ENCODE measurements at regions of chr6 and their contacts with region 1.

Region 1: DNA sequence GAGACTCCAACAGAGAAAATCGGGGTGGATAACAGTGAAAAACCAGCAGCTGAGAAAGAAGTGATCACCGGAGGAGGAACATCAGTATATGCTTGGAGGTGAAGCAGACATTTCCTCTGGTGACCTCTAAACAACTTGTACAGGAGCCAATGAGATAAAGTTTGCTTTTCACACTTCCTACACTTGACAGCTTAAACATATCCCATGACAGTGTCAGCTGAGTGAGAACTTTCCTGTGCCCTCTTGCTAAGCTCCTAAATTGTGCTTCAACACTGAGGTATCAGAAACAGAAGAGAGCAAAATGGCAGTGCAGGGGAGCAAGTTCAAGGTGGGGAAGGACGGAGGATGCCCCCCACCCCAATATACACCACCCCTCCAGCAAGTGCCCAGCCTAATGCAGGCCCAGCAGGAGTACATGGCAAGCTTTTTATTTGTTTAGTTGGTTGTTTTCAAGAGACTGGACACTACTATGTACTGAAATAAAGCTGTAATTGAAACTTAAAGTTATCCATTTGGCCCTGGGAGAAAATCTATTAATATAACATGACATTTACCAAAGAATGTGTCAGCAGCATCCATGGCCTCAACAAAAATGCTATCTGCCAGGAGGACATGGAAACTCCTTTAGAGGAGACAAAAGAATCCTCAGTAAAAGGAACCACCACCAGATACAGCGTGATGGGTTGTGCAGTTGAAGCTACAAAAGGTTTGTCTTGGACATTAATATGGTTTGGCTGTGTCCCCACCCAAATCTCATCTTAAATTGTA is 540.2 kb downstream of the PRKN start:
- DNase-seq: no peak
- ATAC-seq: peak; percentile 92

Region 2: GRCh38 chr6:162230147-162230752 is 42.9 kb after region 1 on chr6:
- intact Hi-C with region 1: loop called (anchors 5 kb)
- DNase-seq: no peak
- ATAC-seq: peak; percentile 79

Region 3: DNA sequence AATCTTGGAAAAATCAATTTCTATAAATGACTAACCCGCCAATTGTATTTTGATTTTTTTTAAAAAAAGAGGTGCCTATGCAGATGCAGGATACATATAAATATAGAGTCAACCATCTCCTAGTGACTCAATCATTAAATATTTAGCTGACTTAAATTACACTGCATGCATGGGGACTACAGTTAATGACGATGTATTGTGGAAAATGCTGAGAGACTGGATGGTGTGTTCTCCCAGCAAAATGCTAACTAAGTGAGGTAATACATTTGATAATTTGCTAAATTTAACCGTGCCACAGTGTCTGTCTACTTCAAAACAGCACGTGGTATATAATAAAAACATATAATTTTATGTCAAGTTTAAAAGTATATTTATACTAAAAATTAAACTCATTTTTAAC is 198.6 kb after region 1 on chr6:
- intact Hi-C with region 1: loop called (anchors 5 kb)
- DNase-seq: no peak
- ATAC-seq: no peak

Region 4: GRCh38 chr6:162721404-162721687 is 534.0 kb after region 1 on chr6:
- intact Hi-C with region 1: loop called (anchors 2 kb)
- DNase-seq: no peak
- ATAC-seq: peak; percentile 40

Measured in Right ventricle myocardium inferior (tissue), 1 donor.